ENCODE measurements at regions of chr11 and their contacts with region 1.

Region 1: DNA sequence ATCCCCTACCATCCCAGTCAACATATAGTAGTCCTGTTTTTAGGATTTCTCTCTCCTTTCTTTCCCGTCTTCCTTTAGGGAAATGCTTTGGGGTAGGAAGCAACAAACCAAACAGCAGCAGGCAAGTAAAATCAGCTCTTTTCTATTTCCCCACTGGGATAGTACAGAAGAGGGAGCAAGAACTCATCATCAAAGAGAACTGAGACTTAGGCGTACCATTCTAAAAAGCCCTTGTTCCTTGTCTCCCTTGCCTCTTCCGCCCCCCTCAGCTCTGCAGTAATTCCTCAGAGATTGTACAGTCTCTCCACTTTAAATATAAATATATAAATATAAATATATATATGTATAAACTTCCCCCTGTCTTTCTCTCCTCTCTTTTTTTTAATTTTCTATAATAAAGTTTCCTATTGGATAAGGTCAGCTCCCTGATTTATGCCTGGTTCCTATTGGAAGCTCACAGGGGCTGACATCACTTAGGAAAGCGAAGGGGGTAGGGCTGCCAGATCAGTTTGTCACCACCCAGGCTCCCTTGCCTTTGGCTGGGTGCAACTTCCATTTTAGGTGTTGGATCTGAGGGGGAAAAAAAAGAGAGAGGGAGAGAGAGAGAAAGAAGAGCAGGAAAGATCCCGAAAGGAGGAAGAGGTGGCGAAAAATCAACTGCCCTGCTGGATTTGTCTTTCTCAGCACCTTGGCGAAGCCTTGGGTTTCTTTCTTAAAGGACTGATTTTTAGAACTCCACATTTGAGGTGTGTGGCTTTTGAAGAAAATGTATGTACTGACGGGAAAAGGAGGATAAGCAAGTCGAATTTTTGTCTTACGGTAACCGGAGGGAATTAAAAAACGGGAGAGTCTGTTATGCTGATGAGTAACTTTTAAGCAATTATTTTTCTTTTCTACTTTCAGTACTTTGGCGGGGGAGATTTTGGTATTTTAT is at the start of gene CTNND1:
- DNase-seq: peak; percentile 97
- ATAC-seq: peak; percentile 95
- H3K4me3 ChIP-seq: peak within 1 kb of the TSS; percentile 80 to 97 (median 88)
- H3K27ac ChIP-seq: peak within 1 kb of the TSS; percentile 99
- H3K4me1 ChIP-seq: peaks cover 49% of the 10 kb centered on the region
- H3K27me3 ChIP-seq: no peaks in the 10 kb centered on the region; a peak in 1 of 5 replicates
- CTCF ChIP-seq: no peak
- EP300 ChIP-seq: peak in 1 of 2 experiments; percentile 4; a peak in 1 of 4 replicates
- POLR2A ChIP-seq: peak; percentile 68 to 87
- RAD21 ChIP-seq: no peak
- total RNA-seq, gene CTNND1: 128 and 184 TPM in 2 replicates

Region 2: GRCh38 chr11:57712256-57713150 is 49.1 kb before region 1 on chr11 and contains the start of gene TMX2:
- CTCF ChIA-PET with region 1: no interaction called
- POLR2A ChIA-PET with region 1: interaction called, 11 read pairs
- in situ Hi-C with region 1: no loop called
- intact Hi-C with region 1: no loop called
- DNase-seq: peak; percentile 100
- ATAC-seq: peak; percentile 95
- H3K4me3 ChIP-seq: peak within 1 kb of the TSS; percentile 92 to 98 (median 92)
- H3K27ac ChIP-seq: peak within 1 kb of the TSS; percentile 82
- H3K4me1 ChIP-seq: peaks cover 29% of the 10 kb centered on the region
- H3K27me3 ChIP-seq: no peaks in the 10 kb centered on the region; a peak in 1 of 5 replicates
- CTCF ChIP-seq: no peak
- EP300 ChIP-seq: no peak
- POLR2A ChIP-seq: peak; percentile 69 to 85
- RAD21 ChIP-seq: no peak
- total RNA-seq, gene TMX2: 67.0 and 129 TPM in 2 replicates

Region 3: DNA sequence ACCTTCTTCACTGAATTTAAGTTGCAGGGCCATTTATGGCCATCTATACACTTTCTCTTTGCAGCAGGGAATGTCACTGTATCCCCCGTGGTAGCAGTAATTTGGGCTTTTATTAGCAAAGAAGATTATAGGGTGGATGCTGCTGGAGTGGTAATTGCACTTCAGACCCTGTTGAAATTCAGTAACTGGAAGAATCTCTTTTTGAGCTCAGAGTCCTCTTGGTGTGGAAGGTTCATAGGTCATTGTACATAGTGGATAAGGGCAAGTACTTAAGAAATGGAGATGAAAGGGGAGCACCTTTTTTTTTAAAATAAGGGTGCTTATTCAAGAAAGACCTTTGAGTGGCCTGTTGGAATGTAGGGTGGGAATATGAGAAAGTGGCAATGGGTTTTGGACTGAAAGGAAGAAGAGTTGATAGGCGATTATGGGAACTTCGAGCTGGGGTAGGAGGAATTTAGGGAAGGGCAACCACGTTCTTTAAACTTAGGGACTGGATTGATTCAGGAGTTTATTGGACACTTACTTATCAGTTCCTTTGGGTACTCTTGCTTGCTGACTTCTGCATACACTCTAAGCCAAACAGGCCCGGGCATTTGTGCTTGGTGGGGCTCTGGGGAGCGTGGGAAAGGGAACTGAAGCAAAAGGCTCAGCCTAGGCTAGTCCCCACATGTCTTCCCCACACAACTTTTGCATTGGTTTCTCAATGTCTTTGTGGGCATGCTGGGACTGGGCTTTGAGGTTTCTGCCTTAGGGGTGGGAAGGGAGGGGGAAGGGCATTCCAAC is 26.5 kb after region 1 on chr11:
- CTCF ChIA-PET with region 1: no interaction called
- POLR2A ChIA-PET with region 1: interaction called, 11 read pairs
- in situ Hi-C with region 1: no loop called
- intact Hi-C with region 1: no loop called
- DNase-seq: peak; percentile 32
- ATAC-seq: peak; percentile 57
- H3K4me3 ChIP-seq: no peak overlapping the region
- H3K27ac ChIP-seq: peak overlapping the region; percentile 69
- H3K4me1 ChIP-seq: peaks cover 97% of the 10 kb centered on the region
- H3K27me3 ChIP-seq: no peaks in the 10 kb centered on the region
- CTCF ChIP-seq: no peak
- EP300 ChIP-seq: peak in 1 of 2 experiments; percentile 42; a peak in 1 of 4 replicates
- POLR2A ChIP-seq: no peak
- RAD21 ChIP-seq: no peak

Measured in HepG2 (cell line).